Right ventricle myocardium inferior (tissue), 1 donor: ENCODE measurements at regions of chr7 and their contacts with region 1.

Region 1: DNA sequence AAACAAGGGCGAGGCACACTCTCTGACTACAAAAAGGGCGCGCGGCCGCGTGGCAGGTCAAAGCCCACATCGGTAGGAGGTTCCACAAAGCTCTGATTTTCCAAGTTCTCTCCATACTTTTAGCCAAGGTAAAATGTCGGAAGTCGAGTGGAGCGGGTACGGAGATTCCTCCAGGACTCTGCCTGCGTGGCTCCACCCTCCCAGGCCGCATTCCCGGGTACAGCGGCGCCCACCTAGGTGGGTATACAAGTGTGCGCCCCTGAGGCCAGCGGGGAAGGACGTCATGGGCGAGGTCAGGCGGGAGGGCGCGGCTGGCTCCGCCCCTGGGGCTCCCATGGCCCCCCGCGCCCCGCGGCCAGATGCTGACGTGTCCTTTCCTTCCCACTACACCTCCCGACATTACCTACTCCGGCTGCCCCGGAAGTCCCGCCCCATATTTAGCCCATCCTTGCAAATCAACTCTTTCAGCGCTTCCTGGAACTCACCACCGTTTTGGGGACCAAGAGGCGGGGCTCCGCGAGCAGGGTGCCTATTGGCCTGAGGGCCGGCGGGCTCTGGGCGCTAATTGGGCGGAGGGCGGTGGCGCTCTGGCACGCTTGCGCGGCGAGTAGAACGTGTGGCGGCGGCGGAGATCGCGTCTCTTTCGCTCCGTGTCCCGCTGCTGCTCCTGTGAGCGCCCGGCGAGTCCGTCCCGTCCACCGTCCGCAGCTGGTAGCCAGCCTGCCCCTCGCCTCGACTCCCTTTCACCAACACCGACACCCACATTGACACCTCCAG is at the start of gene SND1:
- DNase-seq: peak; percentile 99
- ATAC-seq: peak; percentile 98
- total RNA-seq, gene SND1: 85.0 TPM

Region 2: GRCh38 chr7:127588019-127588696 is 63.6 kb before region 1 on chr7 and contains the start of gene ARF5:
- intact Hi-C with region 1: loop called (anchors 2 kb)
- DNase-seq: peak; percentile 94
- ATAC-seq: peak; percentile 94
- total RNA-seq, gene ARF5: 78.1 TPM